ENCODE measurements at regions of chr17 and their contacts with region 1.

Region 1: GRCh38 chr17:29012535-29012934 is 6.7 kb upstream of the SEZ6 start:
- DNase-seq: no peak
- ATAC-seq: no peak
- H3K4me3 ChIP-seq: no peak overlapping the region
- H3K27ac ChIP-seq: no peak overlapping the region
- H3K4me1 ChIP-seq: no peaks in the 10 kb centered on the region
- H3K27me3 ChIP-seq: peaks cover 0 to 33% (median 23%) of the 10 kb centered on the region in 7 donors
- CTCF ChIP-seq: no peak

Region 2: GRCh38 chr17:28992625-28993600 is 19.6 kb before region 1 on chr17:
- intact Hi-C with region 1: loop called in 1 of 10 experiments (anchors 2 kb)
- DNase-seq: no peak
- ATAC-seq: no peak
- H3K4me3 ChIP-seq: no peak overlapping the region
- H3K27ac ChIP-seq: no peak overlapping the region
- H3K4me1 ChIP-seq: peaks cover 0 to 6% (median 0%) of the 10 kb centered on the region in 9 donors
- H3K27me3 ChIP-seq: no peaks in the 10 kb centered on the region
- CTCF ChIP-seq: no peak

Measured in heart right ventricle (tissue), 16 donors.